A673 (cell line): ENCODE measurements at regions of chr7 and their contacts with region 1.

Region 1: DNA sequence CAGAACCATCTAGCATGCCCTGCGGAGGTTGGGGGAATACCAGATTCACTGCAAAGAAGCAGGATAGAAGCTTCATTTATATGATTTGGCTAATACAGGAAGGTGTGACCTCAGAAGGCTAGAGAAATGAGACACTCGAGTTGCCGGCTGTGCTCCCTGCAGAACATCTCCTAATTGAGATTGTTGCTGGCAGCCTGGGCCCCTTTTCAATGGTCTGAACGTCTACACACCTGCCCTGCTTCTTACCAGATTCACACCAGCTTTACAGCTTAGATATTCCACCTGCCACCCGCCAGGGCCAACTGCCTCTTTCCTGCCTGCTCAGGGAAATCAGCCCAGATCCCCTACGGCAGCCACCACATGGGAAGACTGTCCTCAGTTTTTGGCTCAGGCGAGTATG is 475.3 kb upstream of the AUTS2 start:
- DNase-seq: no peak
- H3K4me3 ChIP-seq: no peak overlapping the region
- H3K27ac ChIP-seq: no peak overlapping the region
- H3K4me1 ChIP-seq: no peaks in the 10 kb centered on the region
- H3K27me3 ChIP-seq: no peaks in the 10 kb centered on the region
- CTCF ChIP-seq: no peak

Region 2: GRCh38 chr7:68706291-68706690 is 416.7 kb before region 1 on chr7:
- CTCF ChIA-PET with region 1: no interaction called
- POLR2A ChIA-PET with region 1: interaction called, 15 read pairs
- intact Hi-C with region 1: no loop called
- DNase-seq: peak; percentile 85
- H3K4me3 ChIP-seq: no peak overlapping the region
- H3K27ac ChIP-seq: peak overlapping the region; percentile 86
- H3K4me1 ChIP-seq: peaks cover 8% of the 10 kb centered on the region
- H3K27me3 ChIP-seq: no peaks in the 10 kb centered on the region
- CTCF ChIP-seq: no peak

Region 3: DNA sequence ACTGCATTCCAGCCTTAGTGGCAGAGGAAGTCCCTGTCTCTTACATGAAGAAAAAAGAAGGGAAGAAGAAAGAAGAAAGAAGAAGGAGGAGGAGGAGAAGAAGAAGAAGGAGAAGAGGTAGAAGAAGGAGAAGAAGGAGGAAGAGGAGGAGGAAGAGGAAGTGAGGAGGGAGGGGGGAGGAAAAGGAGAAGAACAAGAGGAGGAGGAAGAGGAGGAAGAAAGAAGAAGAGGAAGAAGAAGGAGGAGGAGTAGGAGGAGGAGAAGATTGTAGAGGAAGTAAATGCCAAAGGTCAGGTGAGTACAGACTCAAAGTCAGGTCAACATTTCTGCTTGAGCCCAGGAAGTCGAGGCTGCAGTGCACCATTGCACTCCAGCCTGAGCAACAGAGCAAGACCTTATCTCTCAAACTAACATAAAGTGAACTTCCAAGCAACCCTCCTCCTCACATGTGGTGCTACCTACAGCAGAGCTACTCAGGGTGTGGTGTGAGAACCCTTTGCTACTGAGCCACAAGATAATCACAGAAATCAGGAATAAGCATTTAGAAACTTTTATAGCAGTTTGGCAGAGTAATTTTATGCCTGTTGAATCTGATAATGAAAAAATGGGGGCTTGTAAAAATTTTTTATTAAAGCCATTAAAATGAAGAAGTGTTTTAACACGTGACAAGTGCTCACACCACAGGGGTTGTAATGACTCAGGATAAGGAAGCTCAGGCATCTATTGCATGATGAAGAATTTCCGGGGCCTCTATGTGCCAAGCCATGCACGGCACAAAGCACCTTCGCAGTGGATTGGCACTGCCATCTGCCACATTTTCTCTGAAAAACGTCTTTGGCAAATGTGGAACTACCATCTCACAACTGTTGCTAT is 250.5 kb after region 1 on chr7:
- CTCF ChIA-PET with region 1: no interaction called
- POLR2A ChIA-PET with region 1: no interaction called
- intact Hi-C with region 1: no loop called
- DNase-seq: peak; percentile 67
- H3K4me3 ChIP-seq: no peak overlapping the region
- H3K27ac ChIP-seq: no peak overlapping the region
- H3K4me1 ChIP-seq: peaks cover 12% of the 10 kb centered on the region
- H3K27me3 ChIP-seq: no peaks in the 10 kb centered on the region
- CTCF ChIP-seq: no peak